HEK293 (cell line): ENCODE measurements at regions of chr12 and their contacts with region 1.

Region 1: DNA sequence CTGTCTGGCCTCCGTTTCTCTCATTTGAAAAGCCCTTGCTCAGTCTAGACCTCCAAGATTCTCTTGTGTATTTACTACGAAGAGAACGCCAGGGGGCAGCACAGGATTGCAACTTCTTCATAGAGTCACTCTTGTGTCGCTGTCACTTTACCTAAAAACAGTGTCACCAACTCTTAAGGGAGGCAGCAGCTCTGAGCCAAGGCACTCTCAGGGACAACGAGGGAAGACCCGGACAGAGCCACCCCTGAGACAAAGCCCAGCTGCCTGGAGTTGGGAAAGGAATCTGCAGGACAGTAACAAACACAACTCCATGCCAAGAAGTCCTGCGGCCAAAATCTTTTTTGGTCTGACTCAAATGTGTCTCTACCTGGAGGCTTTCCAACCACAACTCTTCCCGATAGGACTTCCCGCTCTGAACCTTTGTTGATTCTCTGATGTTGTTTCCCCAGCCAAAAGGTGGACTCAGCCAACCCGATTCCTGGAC is 9.6 kb upstream of the RPAP3 start:
- H3K4me3 ChIP-seq: no peak overlapping the region
- H3K27ac ChIP-seq: no peak overlapping the region
- H3K4me1 ChIP-seq: peaks cover 5% of the 10 kb centered on the region
- CTCF ChIP-seq: peak; percentile 69

Region 2: DNA sequence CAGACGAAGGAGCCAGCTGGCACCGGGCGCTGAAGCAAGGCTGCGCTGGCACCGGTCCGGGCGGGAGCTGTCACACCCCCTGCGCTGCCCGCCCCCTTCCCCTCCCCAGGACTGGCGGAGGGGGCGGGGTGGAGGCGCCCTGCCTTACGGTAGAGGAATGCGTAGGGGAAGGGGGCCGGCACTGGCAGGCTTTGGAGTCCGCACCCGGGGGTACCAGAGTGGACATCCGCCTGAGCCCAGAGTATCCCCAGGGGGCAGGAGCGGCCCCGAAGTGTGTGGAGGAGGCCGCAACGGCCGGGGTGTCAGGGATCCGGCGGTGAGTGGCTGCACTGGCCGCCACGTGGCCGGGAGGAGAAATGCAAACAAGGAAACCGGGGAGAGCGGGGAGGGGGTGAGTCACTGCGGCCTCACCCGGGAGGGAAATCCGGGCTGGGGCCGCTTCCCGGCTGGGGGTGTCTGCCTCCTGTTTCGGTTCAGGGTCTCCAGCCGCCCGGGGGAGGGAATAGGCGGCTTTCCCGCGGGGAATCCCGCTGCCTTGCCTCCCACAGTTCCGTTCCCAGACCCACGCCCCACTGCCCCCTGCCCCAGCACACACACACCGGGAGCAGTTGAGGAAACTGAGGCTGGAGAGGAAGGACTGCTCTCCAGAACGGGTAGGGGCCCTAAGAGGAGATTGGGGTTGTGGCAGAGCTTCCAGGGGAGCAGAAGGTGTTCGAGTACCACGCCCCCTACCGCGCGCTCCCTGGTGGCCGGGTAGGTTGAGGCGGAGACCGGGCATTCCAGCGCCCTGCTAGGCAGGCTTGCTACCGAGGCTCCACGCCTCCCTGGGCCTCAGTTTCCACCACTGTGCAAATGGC is 43.6 kb after region 1 on chr12 and contains the start of gene RAPGEF3:
- CTCF ChIA-PET with region 1: interaction called, 11 read pairs
- POLR2A ChIA-PET with region 1: no interaction called
- H3K4me3 ChIP-seq: peak within 1 kb of the TSS; percentile 46
- H3K27ac ChIP-seq: peak within 1 kb of the TSS; percentile 11; the same call in 1 of the 2 replicates
- H3K4me1 ChIP-seq: peaks cover 5% of the 10 kb centered on the region; the same call in 1 of the 2 replicates
- CTCF ChIP-seq: peak; percentile 71

Region 3: GRCh38 chr12:47773062-47773857 is 57.8 kb after region 1 on chr12 and contains the start of gene SLC48A1:
- CTCF ChIA-PET with region 1: interaction called, 181 read pairs
- POLR2A ChIA-PET with region 1: no interaction called
- H3K4me3 ChIP-seq: peak within 1 kb of the TSS; percentile 76
- H3K27ac ChIP-seq: peak within 1 kb of the TSS; percentile 75; the same call in 1 of the 2 replicates
- H3K4me1 ChIP-seq: no peaks in the 10 kb centered on the region; the same call in 1 of the 2 replicates
- CTCF ChIP-seq: peak; percentile 74

Region 4: DNA sequence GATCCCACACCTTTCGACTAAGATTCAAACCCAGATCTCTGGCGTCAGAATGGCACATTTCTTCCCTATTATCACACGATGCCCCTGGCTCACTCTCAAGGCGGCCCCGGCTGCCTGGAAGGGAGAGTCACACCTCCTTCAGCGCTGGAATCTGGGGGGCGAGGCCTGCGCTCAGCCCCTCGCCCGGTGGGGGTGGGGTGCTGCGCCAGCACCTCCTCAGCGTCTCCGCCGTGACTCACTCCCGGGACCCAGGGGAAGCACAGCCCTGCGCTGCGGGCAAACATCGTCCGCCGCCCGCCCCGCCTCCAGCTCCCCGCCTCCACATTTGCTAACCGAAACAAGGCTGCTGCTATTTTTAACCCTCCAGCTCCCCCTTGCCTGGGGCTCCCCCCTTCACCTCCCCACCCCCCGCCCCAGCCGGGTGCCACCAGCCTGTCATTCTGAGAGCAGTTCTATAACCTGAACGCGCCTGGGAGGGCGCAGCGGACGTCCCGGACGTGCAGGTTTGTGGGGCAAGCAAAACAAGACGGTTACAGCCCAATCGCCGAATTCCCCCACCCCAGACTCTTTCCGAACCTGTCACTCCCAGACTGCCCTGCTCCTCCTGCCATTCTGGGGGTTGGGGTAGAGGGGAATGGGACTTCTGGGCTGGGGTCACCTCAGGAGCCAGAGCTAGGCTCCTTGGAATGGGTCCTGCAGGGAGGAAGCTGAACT is 97.5 kb after region 1 on chr12:
- CTCF ChIA-PET with region 1: interaction called, 13 read pairs
- POLR2A ChIA-PET with region 1: no interaction called
- H3K4me3 ChIP-seq: peak overlapping the region; percentile 28
- H3K27ac ChIP-seq: peak overlapping the region; percentile 66
- H3K4me1 ChIP-seq: peaks cover 27% of the 10 kb centered on the region
- CTCF ChIP-seq: no peak

Region 5: DNA sequence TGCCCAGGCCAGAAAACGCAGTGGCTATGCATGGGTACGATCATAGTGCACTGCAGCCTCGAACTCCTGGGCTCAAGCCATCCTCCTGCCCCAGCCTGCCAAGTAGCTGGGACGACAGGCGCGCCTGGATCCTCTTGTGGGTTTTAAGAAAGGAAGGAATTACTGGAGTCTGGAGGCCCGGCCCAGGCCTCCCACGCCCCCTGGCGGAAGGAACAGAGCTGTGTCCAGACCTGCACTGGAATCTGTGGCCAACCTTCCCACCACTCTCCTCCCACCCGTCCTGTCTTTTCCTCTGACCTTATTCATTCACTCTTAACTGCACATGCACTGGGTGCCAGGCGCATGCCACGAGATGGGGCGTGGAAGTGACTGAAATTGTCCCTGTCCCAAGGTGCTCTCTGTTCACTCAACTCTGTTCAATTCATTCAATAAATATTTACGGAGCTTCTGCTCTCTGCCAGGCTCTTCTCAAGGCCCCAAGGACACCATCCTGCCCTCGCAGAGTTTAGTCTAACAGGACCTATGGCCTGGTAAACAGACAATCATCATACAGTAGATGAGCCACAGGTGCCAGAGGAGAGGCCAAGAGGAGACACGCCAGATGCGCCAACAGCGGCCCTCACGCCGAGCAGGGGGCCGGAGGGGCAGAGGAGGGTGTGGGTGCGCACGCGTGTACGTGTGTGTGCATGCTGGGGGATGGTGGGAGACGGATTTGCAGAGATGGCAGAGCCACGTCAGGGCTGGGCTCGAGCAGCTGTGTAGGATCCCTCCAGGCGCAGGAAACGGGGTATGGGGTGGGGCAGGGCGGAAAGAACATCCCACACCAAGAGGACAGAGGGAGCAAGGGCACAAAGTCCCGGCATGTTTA is 234.2 kb after region 1 on chr12:
- CTCF ChIA-PET with region 1: interaction called, 15 read pairs
- POLR2A ChIA-PET with region 1: no interaction called
- H3K4me3 ChIP-seq: no peak overlapping the region
- H3K27ac ChIP-seq: no peak overlapping the region
- H3K4me1 ChIP-seq: no peaks in the 10 kb centered on the region; the same call in 1 of the 2 replicates
- CTCF ChIP-seq: peak; percentile 87